ENCODE measurements at regions of chr2 and their contacts with region 1.

Region 1: DNA sequence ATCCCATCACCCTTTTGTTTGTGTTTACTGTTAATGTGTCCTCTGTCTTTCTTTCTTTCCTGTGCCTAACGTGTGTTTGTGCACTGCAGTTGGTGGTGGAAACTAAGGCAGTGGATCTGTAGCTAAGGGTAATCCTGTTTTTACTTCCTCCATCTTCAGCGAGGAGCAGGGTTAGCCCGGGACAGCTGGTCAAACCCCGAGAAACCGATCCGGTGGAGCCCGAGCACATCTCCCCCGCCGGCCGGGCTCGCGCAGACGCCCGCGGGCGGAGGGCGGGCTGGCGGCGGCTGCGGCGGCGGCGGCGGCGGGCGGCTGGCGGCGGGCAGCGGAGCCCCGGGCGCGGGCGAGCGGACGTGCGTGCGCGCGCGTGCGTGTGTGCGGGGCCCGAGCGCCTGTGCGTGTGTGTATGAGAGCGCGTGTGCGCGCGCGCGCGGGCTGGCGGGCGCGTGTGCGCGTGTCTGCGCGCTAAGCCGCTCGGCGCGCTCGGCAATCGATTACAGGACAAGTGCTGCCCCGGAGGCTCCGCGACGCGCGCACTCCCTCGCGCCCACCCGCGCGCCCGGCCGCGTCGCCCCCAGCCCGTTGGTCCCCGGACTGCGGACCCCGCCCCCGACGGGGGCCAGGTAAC is at the start of gene IKZF2:
- DNase-seq: peak; percentile 84
- H3K4me3 ChIP-seq: peak within 1 kb of the TSS; percentile 74 to 91 (median 78)
- H3K27ac ChIP-seq: peak within 1 kb of the TSS; percentile 93 to 99 (median 97)
- H3K4me1 ChIP-seq: peaks cover 0 to 20% (median 11%) of the 10 kb centered on the region in 4 donors
- H3K27me3 ChIP-seq: no peaks in the 10 kb centered on the region
- CTCF ChIP-seq: no peak
- EP300 ChIP-seq: no peak
- POLR2A ChIP-seq: peak; percentile 39
- total RNA-seq, gene IKZF2: 1.8 to 15.6 (median 12.3) TPM

Region 2: DNA sequence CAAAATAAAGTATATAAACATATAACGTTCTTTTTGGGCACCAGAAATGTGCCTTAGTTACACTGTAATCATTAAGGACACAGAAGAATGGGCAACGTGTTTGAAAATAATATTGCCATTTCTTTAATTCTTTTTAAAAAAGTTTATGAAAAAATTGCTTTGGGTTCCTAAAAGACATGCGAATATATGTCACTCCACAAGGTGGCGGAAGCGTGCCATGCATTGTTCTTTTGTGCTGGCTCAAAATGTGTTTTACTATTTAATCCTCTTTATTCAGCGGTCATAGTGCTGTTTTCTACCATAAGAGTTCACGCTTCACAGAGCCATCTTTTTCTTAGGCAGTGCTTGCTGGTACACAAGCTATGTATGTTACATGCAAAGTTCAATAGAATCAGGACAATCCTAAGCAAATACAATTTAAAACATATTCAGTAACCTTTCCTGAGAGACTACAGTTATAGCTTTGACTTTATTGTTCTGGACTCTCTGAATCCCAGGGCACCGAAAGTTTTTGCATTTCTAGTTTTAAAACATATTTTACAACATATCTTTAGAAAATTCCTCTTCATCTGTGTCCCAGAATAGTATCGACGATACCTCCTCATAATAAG is 465.2 kb before region 1 on chr2:
- in situ Hi-C with region 1: loop called in 3 of 4 experiments (anchors 25 kb)
- intact Hi-C with region 1: no loop called
- DNase-seq: peak; percentile 48
- H3K4me3 ChIP-seq: no peak overlapping the region
- H3K27ac ChIP-seq: no peak overlapping the region
- H3K4me1 ChIP-seq: no peaks in the 10 kb centered on the region
- H3K27me3 ChIP-seq: no peaks in the 10 kb centered on the region
- CTCF ChIP-seq: peak; percentile 60 to 90 (median 70)
- EP300 ChIP-seq: no peak
- POLR2A ChIP-seq: no peak

Region 3: DNA sequence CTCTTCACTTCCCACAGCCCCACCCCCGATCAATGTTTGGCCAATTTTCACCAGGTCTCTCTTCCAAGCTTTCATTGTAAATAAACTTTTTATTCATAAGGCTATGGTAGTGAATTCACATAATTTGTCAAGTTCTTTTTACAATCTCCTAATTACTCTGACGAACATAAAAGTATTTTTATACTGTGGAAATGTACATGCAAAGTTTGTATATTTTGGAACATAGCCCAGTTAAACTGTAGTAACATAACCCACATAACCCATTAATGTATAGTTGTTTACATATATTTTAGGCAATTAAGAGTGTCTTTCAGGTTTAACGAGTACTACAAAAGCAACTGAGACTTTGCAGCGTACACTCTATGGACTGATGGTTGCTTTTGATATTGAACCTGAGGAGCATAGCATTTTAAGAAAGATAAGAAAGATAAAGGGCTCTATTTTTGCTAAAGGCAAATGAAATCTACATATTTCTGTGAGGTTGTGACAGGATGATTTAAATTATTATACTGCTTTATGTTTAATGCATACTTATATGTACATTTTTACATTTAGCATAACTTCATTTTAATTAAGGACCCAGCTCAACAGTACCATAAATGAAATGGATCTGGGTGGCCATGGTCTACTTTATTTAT is 384.5 kb before region 1 on chr2:
- in situ Hi-C with region 1: loop called in 3 of 4 experiments (anchors 5 to 10 kb)
- intact Hi-C with region 1: no loop called
- DNase-seq: no peak
- H3K4me3 ChIP-seq: no peak overlapping the region
- H3K27ac ChIP-seq: no peak overlapping the region
- H3K4me1 ChIP-seq: no peaks in the 10 kb centered on the region
- H3K27me3 ChIP-seq: no peaks in the 10 kb centered on the region
- CTCF ChIP-seq: no peak
- EP300 ChIP-seq: no peak
- POLR2A ChIP-seq: no peak

Region 4: DNA sequence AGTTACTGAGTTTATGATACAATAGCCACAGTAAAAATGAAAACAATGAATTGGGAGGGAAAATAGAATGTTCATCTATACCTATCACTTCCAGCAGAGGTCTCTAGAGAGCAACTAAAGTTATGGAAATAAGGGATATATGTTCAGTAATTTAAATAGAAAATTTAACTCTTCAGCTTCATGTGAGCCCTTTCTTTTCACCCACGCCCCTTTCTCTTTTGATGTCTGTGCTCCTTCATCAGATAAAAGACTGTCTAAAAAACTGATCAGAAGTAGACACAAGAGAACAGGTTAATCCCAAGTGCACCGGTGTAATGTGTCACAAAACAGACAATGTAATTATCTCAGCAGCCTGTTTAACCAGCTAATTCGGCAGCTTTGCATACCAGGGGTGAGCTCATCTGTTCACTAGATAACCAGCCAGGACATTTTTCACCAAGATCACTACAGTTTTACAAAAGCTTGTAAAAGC is 374.5 kb before region 1 on chr2:
- in situ Hi-C with region 1: loop called in 3 of 4 experiments (anchors 5 to 10 kb)
- intact Hi-C with region 1: loop called (anchors 5 kb)
- DNase-seq: no peak
- H3K4me3 ChIP-seq: no peak overlapping the region
- H3K27ac ChIP-seq: no peak overlapping the region
- H3K4me1 ChIP-seq: no peaks in the 10 kb centered on the region
- H3K27me3 ChIP-seq: no peaks in the 10 kb centered on the region
- CTCF ChIP-seq: peak; percentile 52 to 65 (median 54)
- EP300 ChIP-seq: no peak
- POLR2A ChIP-seq: no peak

Region 5: GRCh38 chr2:213279971-213280370 is 128.4 kb after region 1 on chr2:
- in situ Hi-C with region 1: no loop called
- intact Hi-C with region 1: no loop called
- DNase-seq: no peak
- H3K4me3 ChIP-seq: no peak overlapping the region
- H3K27ac ChIP-seq: no peak overlapping the region
- H3K4me1 ChIP-seq: peaks cover 0 to 11% (median 6%) of the 10 kb centered on the region in 4 donors
- H3K27me3 ChIP-seq: no peaks in the 10 kb centered on the region
- CTCF ChIP-seq: no peak
- EP300 ChIP-seq: no peak
- POLR2A ChIP-seq: no peak

Region 6: GRCh38 chr2:214809751-214810564 is 1658.4 kb after region 1 on chr2:
- in situ Hi-C with region 1: loop called in 1 of 4 experiments (anchors 25 kb)
- intact Hi-C with region 1: no loop called
- DNase-seq: peak; percentile 100
- H3K4me3 ChIP-seq: peak overlapping the region; percentile 20 to 89 (median 79)
- H3K27ac ChIP-seq: peak overlapping the region; percentile 88 to 98 (median 96)
- H3K4me1 ChIP-seq: peaks cover 0 to 17% (median 12%) of the 10 kb centered on the region in 4 donors
- H3K27me3 ChIP-seq: no peaks in the 10 kb centered on the region
- CTCF ChIP-seq: no peak
- EP300 ChIP-seq: no peak
- POLR2A ChIP-seq: no peak

Measured in transverse colon (tissue), 4 donors.